ENCODE measurements at regions of chr17 and their contacts with region 1.

Region 1: GRCh38 chr17:7383742-7384488 is 3.0 kb downstream of the TNK1 start:
- DNase-seq: peak; percentile 65 to 93 (median 82)
- ATAC-seq: peak; percentile 95
- H3K4me3 Mint-ChIP-seq: peak overlapping the region; percentile 77 to 94 (median 86)
- H3K27ac Mint-ChIP-seq: peak overlapping the region; percentile 48 to 97 (median 96)
- H3K4me1 Mint-ChIP-seq: peaks cover 15 to 42% (median 24%) of the 10 kb centered on the region in 4 donors
- H3K27me3 Mint-ChIP-seq: peaks cover 14 to 33% (median 29%) of the 10 kb centered on the region in 5 donors

Region 2: GRCh38 chr17:7394452-7395191 is 10.7 kb after region 1 on chr17 and contains the start of gene PLSCR3:
- POLR2A ChIA-PET with region 1: interaction called, 50 read pairs
- DNase-seq: peak; percentile 64 to 93 (median 84)
- ATAC-seq: peak; percentile 84 to 87
- H3K4me3 Mint-ChIP-seq: peak within 1 kb of the TSS; percentile 93 to 97 (median 94)
- H3K27ac Mint-ChIP-seq: peak within 1 kb of the TSS; percentile 85 to 97 (median 94)
- H3K4me1 Mint-ChIP-seq: peaks cover 18 to 46% (median 37%) of the 10 kb centered on the region in 4 donors
- H3K27me3 Mint-ChIP-seq: no peaks in the 10 kb centered on the region
- polyA plus RNA-seq, gene PLSCR3: 90.5 to 152 (median 125) TPM

Region 3: DNA sequence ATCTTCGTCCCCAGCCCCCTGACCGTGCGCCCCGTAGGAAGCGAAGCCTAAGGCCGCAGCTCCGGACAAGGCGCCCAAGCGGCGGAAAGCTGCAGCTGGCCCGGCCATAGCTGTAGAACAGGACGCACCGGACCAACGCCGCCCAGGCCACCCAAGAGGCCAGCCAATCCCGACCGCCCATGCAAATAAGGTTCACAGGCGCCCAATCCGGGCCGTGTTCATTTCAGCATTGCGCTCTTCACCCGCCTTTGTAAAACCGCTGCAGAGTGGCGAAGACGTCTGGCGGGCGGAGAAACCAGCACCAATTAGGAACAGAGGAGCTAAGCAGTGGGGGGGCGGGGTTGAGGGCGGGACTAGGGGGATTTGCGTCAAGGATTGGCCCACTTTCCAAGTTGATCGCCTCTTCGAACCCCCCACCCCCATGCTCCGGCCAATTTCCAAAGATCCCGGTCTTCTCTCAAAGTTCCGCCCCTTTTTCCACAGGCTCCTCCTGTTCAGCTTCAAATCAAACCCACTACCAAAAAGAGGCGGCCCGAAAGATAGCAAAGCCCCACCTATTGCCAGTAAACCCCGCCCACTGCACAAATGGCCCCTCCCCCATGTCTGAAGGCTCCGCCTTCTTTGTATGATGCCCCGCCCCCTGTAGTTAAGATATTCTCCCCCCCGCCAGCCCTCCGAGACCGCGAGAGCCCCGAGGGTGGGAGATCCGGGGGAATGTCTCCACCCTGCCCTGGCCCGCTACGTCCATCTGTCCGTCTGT is 20.2 kb after region 1 on chr17 and contains the start of gene TMEM256:
- POLR2A ChIA-PET with region 1: interaction called, 40 read pairs
- DNase-seq: peak; percentile 89 to 97 (median 93)
- ATAC-seq: peak; percentile 87 to 91
- H3K4me3 Mint-ChIP-seq: peak within 1 kb of the TSS; percentile 92 to 98 (median 96)
- H3K27ac Mint-ChIP-seq: peak within 1 kb of the TSS; percentile 89 to 99 (median 98)
- H3K4me1 Mint-ChIP-seq: peaks cover 15 to 35% (median 28%) of the 10 kb centered on the region in 4 donors
- H3K27me3 Mint-ChIP-seq: peaks cover 0 to 4% (median 0%) of the 10 kb centered on the region in 5 donors
- polyA plus RNA-seq, gene TMEM256: 62.6 to 96.5 (median 81.4) TPM

Measured in naive thymus-derived CD8-positive, alpha-beta T cell (primary cell).